Activated T-helper 2 cell treated with anti-CD3 and anti-CD28 coated beads, Interferon-gamma antibody, Interleukin-2, Interleukin-4, amounts not matched to agents 10 μg/mL and 5 μg/mL and 100 μg/mL, durations not matched to agents 14 hours and 24 hours and 36 hours (primary cell): ENCODE measurements at regions of chr13 and their contacts with region 1.

Region 1: GRCh38 chr13:40221460-40222201 is 444.8 kb downstream of the FOXO1 start:
- DNase-seq: peak; percentile 17
- H3K4me3 Mint-ChIP-seq: peak overlapping the region; percentile 1
- H3K27ac Mint-ChIP-seq: peak overlapping the region; percentile 83
- H3K4me1 Mint-ChIP-seq: peaks cover 38% of the 10 kb centered on the region
- H3K27me3 Mint-ChIP-seq: peaks cover 2% of the 10 kb centered on the region

Region 2: DNA sequence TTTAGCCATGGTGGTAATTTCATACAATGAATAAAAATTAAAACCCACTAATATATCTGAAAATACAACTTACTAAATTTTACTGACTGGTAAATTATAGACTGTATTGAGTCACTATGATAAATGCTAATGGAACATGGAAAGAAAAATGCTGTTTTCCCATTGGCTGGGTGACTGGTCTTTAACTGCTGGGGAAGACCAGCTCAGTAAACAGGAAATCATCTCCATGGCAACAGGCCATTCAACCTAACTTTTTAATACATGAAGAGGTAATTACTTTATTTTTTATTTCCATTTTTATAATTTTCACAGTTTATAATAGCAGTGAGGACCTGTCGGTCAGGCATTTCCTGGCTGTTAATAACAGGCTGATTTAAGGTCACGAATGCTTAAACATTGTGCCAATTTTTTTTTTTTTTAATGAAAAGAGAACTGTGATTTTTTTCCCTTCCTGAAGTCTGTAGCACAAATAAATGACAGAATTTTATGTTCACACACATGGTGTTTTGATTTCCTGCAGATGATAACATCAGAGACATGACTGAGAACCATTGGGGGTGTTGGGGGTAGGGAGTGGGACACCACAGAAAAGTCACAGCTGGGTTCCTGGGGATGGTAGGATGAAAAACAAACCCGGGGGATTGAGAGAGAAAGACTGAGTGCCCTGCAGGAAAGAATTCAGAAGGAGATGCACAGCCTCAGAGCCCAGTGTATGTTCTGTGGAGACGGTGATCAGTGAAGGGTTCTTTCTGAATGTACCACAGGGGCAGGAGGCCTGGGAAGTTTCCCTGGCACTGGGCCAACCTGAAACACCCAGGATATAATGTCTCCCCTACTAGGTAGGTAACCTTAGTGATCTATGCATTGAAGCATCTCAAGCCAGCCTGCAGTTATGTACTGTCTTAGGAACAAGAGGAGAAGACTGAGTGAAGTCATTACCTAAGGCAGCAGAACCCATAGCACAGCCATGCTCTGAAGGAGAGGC is 269.1 kb before region 1 on chr13:
- intact Hi-C with region 1: loop called (anchors 10 kb)
- DNase-seq: no peak
- H3K4me3 Mint-ChIP-seq: no peak overlapping the region
- H3K27ac Mint-ChIP-seq: peak overlapping the region; percentile 6
- H3K4me1 Mint-ChIP-seq: peaks cover 42% of the 10 kb centered on the region
- H3K27me3 Mint-ChIP-seq: peaks cover 6% of the 10 kb centered on the region

Region 3: DNA sequence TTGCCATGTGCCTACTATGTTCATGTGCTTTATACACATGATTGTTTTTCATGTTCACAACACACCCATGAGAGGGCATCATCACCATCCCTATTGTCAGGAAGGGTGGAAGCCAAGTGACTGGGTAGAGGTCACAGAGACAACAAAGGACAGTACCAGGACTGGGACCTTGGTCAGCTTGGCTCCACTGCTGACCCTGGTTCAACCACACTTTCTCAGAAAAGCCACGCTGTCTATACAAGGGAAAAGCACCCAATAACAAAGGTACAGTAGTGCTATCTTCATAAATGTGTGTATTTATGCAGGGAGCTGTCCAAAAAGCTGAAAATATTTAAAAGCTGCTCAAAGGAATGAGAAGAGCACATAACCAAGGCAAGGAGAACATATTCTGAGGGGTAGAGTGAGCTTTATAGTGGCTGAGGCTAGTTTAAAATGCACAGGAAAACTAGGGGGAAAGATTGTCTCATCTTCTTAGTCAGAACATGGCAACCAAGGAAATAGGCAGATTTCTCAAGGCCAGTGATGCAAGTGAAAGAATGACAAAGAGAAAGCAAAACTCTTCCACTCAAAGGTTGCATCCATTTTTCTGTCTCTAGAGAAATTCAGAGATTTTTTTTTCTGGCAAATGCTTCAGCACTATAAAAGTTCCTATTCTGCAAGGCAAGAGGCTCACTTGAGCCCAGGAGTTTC is 29.9 kb after region 1 on chr13:
- intact Hi-C with region 1: loop called (anchors 1 kb)
- DNase-seq: no peak
- H3K4me3 Mint-ChIP-seq: no peak overlapping the region
- H3K27ac Mint-ChIP-seq: peak overlapping the region; percentile 75
- H3K4me1 Mint-ChIP-seq: peaks cover 32% of the 10 kb centered on the region
- H3K27me3 Mint-ChIP-seq: no peaks in the 10 kb centered on the region

Region 4: GRCh38 chr13:40318366-40318765 is 96.7 kb after region 1 on chr13:
- intact Hi-C with region 1: loop called (anchors 10 kb)
- DNase-seq: no peak
- H3K4me3 Mint-ChIP-seq: no peak overlapping the region
- H3K27ac Mint-ChIP-seq: no peak overlapping the region
- H3K4me1 Mint-ChIP-seq: peaks cover 54% of the 10 kb centered on the region
- H3K27me3 Mint-ChIP-seq: no peaks in the 10 kb centered on the region

Region 5: DNA sequence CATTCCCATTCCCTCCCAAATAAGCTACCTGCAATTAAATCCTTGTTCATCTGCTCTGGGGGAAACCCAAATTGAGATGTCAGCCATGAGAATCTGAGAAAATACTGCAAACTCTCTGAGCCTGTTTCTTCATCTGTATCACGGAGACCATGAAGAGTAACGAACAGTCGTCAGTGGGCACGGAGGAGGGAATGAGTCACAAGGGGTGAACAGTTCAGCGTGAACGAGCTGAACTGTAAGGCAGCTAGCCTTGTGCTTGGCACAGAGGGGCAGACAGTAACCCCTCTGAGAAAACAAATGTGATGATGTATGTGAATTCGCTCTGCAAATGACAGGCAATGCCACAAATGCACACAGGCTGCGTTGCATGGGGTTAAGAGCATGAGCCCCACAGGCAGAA is 156.2 kb after region 1 on chr13:
- intact Hi-C with region 1: loop called (anchors 10 kb)
- DNase-seq: no peak
- H3K4me3 Mint-ChIP-seq: no peak overlapping the region
- H3K27ac Mint-ChIP-seq: no peak overlapping the region
- H3K4me1 Mint-ChIP-seq: peaks cover 18% of the 10 kb centered on the region
- H3K27me3 Mint-ChIP-seq: no peaks in the 10 kb centered on the region

Region 6: GRCh38 chr13:40613192-40613818 is 391.7 kb after region 1 on chr13:
- intact Hi-C with region 1: loop called (anchors 5 kb)
- DNase-seq: peak; percentile 55
- H3K4me3 Mint-ChIP-seq: peak overlapping the region; percentile 80
- H3K27ac Mint-ChIP-seq: peak overlapping the region; percentile 95
- H3K4me1 Mint-ChIP-seq: peaks cover 64% of the 10 kb centered on the region
- H3K27me3 Mint-ChIP-seq: no peaks in the 10 kb centered on the region

Region 7: GRCh38 chr13:40770934-40771618 is 549.4 kb after region 1 on chr13 and contains the start of gene MRPS31:
- intact Hi-C with region 1: loop called (anchors 10 kb)
- DNase-seq: peak; percentile 94
- H3K4me3 Mint-ChIP-seq: peak within 1 kb of the TSS; percentile 89
- H3K27ac Mint-ChIP-seq: peak within 1 kb of the TSS; percentile 90
- H3K4me1 Mint-ChIP-seq: peaks cover 36% of the 10 kb centered on the region
- H3K27me3 Mint-ChIP-seq: no peaks in the 10 kb centered on the region
- total RNA-seq, gene MRPS31: 42.9 and 43.1 TPM in 2 replicates